Activated B cell treated with CpG ODN at 0.5 μM for 24 hours (primary cell): ENCODE measurements at regions of chr7 and their contacts with region 1.

Region 1: GRCh38 chr7:143885951-143886350 is 16.0 kb downstream of the TCAF1 start:
- DNase-seq: no peak
- ATAC-seq: no peak
- H3K4me3 Mint-ChIP-seq: peak overlapping the region; percentile 8
- H3K27ac Mint-ChIP-seq: no peak overlapping the region
- H3K4me1 Mint-ChIP-seq: peaks cover 33% of the 10 kb centered on the region
- H3K27me3 Mint-ChIP-seq: peaks cover 30% of the 10 kb centered on the region
- CTCF ChIP-seq: no peak

Region 2: GRCh38 chr7:143901668-143902331 is 15.8 kb after region 1 on chr7 and contains the start of gene TCAF1:
- CTCF ChIA-PET with region 1: interaction called, 3 read pairs
- POLR2A ChIA-PET with region 1: interaction called, 4 read pairs
- intact Hi-C with region 1: loop called (anchors 2 kb)
- DNase-seq: peak; percentile 85
- ATAC-seq: peak; percentile 96
- H3K4me3 Mint-ChIP-seq: peak within 1 kb of the TSS; percentile 94
- H3K27ac Mint-ChIP-seq: peak within 1 kb of the TSS; percentile 88
- H3K4me1 Mint-ChIP-seq: peaks cover 23% of the 10 kb centered on the region
- H3K27me3 Mint-ChIP-seq: no peaks in the 10 kb centered on the region
- CTCF ChIP-seq: no peak
- total RNA-seq, gene TCAF1: 12.0 and 13.4 TPM in 2 replicates